Posterior vena cava (tissue), 2 donors: ENCODE measurements at regions of chr2 and their contacts with region 1.

Region 1: GRCh38 chr2:221112744-221113143 is 459.4 kb downstream of the EPHA4 start:
- DNase-seq: no peak

Region 2: DNA sequence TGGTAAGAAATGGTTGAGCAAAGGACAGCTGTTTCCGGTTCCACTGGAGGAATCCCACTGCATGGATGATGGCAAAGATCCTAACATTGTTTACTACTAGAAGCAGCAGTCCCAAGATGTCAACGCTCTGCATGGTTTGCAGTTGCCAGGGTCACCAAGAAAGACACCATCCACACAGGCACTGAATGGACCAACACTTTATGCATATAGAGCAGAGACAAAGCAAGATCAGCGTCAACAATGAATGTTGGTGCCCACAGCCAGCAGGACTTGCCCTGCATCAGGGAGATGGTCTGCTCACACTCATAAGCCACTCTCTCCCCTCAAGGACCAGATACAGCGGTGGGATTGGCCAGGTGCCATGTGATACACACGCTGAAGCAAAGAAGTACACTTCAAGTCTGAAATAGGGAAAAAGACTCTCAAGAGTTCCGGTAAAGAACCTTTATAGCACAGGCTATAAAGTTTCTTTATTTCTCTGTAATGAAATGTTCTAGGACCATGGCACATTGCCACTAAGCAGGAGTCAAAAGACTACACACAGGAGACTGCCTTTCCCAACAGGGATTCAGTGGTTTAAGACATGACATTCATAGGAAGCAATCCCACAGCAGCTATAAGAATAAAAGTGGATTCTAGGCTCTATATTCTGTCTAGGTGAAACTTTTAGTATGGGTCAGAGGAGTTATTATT is 592.6 kb after region 1 on chr2:
- intact Hi-C with region 1: loop called in 1 of 2 experiments (anchors 5 kb)
- DNase-seq: no peak